ENCODE measurements at regions of chr4 and their contacts with region 1.

Region 1: GRCh38 chr4:186067757-186068385 is 1.1 kb upstream of the TLR3 start:
- DNase-seq: peak in 12 of 14 experiments; percentile 5 to 67 (median 32)
- ATAC-seq: peak; percentile 58
- H3K4me3 ChIP-seq: peak overlapping the region; percentile 62
- H3K4me3 Mint-ChIP-seq: peak overlapping the region; percentile 55
- H3K27ac ChIP-seq: no peak overlapping the region
- H3K27ac Mint-ChIP-seq: no peak overlapping the region
- H3K4me1 ChIP-seq: peaks cover 10% of the 10 kb centered on the region
- H3K4me1 Mint-ChIP-seq: peaks cover 24% of the 10 kb centered on the region
- H3K27me3 ChIP-seq: peaks cover 0 to 9% of the 10 kb centered on the region in 2 experiments
- H3K27me3 Mint-ChIP-seq: peaks cover 16% of the 10 kb centered on the region
- CTCF ChIP-seq: peak; percentile 26

Region 2: DNA sequence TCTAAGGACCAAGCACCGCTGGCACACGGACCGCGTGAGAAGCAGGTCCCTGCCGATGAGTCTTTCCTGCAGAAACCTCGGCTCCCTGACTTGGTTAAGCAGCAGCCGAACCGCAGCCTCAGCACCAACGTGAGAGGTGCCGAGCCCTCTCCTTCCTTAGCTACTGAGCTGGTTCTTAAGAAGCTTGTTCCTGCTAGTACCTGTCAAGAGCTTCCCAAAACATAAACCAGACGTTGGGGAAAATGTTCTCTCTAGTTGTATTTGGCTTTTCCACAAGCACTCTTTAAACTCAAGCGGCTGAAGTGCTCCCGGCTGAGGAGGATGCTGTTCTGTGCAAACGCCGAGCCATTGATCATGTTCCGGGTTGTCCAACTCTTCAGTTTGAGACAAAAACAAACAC is 28.2 kb before region 1 on chr4:
- CTCF ChIA-PET with region 1: no interaction called
- POLR2A ChIA-PET with region 1: no interaction called
- intact Hi-C with region 1: no loop called
- DNase-seq: no peak
- ATAC-seq: no peak
- H3K4me3 ChIP-seq: no peak overlapping the region
- H3K4me3 Mint-ChIP-seq: no peak overlapping the region
- H3K27ac ChIP-seq: no peak overlapping the region
- H3K27ac Mint-ChIP-seq: no peak overlapping the region
- H3K4me1 ChIP-seq: no peaks in the 10 kb centered on the region
- H3K4me1 Mint-ChIP-seq: no peaks in the 10 kb centered on the region
- H3K27me3 ChIP-seq: peaks cover 8 to 15% of the 10 kb centered on the region in 2 experiments
- H3K27me3 Mint-ChIP-seq: peaks cover 32% of the 10 kb centered on the region
- CTCF ChIP-seq: no peak

Region 3: DNA sequence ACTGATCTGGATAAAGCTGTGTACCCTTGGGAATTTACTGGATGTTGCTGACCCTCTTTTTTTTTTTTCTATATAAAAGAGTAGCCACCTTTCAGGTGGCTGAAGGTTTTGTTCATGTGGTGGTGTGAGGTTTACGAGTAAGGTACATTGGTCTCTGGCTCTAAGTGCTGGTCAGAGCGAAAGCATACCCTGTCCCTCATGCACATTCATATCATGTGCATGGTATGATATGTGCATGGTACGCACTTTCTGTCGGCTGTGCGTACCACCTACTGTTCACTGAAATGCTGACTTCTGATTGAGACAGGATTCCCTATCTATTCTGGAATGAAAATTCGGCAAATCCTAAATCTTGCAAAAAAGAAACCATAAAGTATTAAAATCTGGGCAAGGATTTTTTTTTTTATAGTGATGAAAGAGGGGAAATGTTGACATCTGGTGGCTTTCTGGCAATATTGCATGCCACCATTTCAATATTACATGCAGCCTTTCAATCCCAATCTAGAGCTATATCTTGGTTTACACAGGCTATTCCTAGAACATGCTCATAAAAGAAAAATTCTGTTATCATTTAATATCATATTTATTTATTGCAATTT is 69.4 kb after region 1 on chr4:
- CTCF ChIA-PET with region 1: interaction called, 3 read pairs
- POLR2A ChIA-PET with region 1: interaction called, 5 read pairs
- intact Hi-C with region 1: loop called (anchors 5 kb)
- DNase-seq: peak in 2 of 14 experiments; percentile 12 to 13
- ATAC-seq: no peak
- H3K4me3 ChIP-seq: no peak overlapping the region
- H3K4me3 Mint-ChIP-seq: no peak overlapping the region
- H3K27ac ChIP-seq: no peak overlapping the region
- H3K27ac Mint-ChIP-seq: no peak overlapping the region
- H3K4me1 ChIP-seq: no peaks in the 10 kb centered on the region
- H3K4me1 Mint-ChIP-seq: no peaks in the 10 kb centered on the region
- H3K27me3 ChIP-seq: no peaks in the 10 kb centered on the region
- H3K27me3 Mint-ChIP-seq: peaks cover 8% of the 10 kb centered on the region
- CTCF ChIP-seq: peak; percentile 65

Region 4: DNA sequence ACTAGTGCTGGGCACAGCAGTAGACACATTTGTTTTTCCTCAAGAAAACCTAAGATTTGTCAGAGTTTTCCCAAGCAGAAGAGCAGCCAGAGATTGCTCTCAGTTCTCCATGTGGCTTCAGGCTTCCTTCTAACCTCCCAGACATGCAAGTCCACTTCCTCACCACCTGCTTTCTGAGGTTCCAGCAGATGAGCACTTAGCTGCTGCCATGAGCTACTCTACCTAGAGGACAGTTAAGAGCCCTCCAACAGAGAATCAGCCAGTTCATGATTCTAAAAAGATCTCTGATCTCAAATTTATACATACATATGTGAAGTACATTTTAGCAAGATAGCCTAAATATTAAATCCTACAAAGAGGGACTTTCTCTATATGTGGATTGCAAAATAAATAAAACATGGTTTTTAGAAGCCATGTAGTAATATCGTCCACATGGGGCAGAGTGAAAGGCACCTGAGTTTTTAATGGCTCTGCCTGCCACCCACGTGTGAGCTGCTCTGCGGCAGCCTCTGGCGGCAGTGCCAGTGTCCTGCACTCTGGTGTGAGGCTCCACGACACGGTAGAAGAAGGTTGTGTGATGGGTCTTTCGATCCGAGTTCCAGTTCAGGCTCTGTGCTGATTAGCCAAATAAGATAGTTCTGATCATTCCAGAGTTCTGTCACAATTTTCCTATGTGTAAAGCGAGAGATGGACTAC is 133.8 kb after region 1 on chr4:
- CTCF ChIA-PET with region 1: interaction called, 6 read pairs
- POLR2A ChIA-PET with region 1: interaction called, 3 read pairs
- intact Hi-C with region 1: loop called (anchors 5 kb)
- DNase-seq: peak; percentile 23 to 85 (median 50)
- ATAC-seq: peak; percentile 85
- H3K4me3 ChIP-seq: no peak overlapping the region
- H3K4me3 Mint-ChIP-seq: peak overlapping the region; percentile 57
- H3K27ac ChIP-seq: no peak overlapping the region
- H3K27ac Mint-ChIP-seq: peak overlapping the region; percentile 16
- H3K4me1 ChIP-seq: peaks cover 16% of the 10 kb centered on the region
- H3K4me1 Mint-ChIP-seq: peaks cover 34% of the 10 kb centered on the region
- H3K27me3 ChIP-seq: no peaks in the 10 kb centered on the region
- H3K27me3 Mint-ChIP-seq: no peaks in the 10 kb centered on the region
- CTCF ChIP-seq: peak; percentile 81

Region 5: GRCh38 chr4:186587416-186588018 is 519.6 kb after region 1 on chr4:
- CTCF ChIA-PET with region 1: interaction called, 10 read pairs
- POLR2A ChIA-PET with region 1: no interaction called
- intact Hi-C with region 1: loop called (anchors 2 to 5 kb)
- DNase-seq: peak; percentile 15 to 65 (median 46)
- ATAC-seq: no peak
- H3K4me3 ChIP-seq: no peak overlapping the region
- H3K4me3 Mint-ChIP-seq: no peak overlapping the region
- H3K27ac ChIP-seq: no peak overlapping the region
- H3K27ac Mint-ChIP-seq: no peak overlapping the region
- H3K4me1 ChIP-seq: no peaks in the 10 kb centered on the region
- H3K4me1 Mint-ChIP-seq: no peaks in the 10 kb centered on the region
- H3K27me3 ChIP-seq: no peaks in the 10 kb centered on the region
- H3K27me3 Mint-ChIP-seq: peaks cover 4% of the 10 kb centered on the region
- CTCF ChIP-seq: peak; percentile 89